ENCODE measurements at regions of chr10 and their contacts with region 1.

Region 1: GRCh38 chr10:77710759-77711682 is 73.4 kb upstream of the KCNMA1 start:
- H3K4me3 ChIP-seq: no peak overlapping the region
- H3K27ac ChIP-seq: no peak overlapping the region
- H3K4me1 ChIP-seq: no peaks in the 10 kb centered on the region
- CTCF ChIP-seq: peak; percentile 97

Region 2: GRCh38 chr10:77173615-77174461 is 537.2 kb before region 1 on chr10:
- CTCF ChIA-PET with region 1: interaction called, 42 read pairs
- POLR2A ChIA-PET with region 1: no interaction called
- H3K4me3 ChIP-seq: no peak overlapping the region
- H3K27ac ChIP-seq: no peak overlapping the region
- H3K4me1 ChIP-seq: no peaks in the 10 kb centered on the region
- CTCF ChIP-seq: peak; percentile 85

Region 3: DNA sequence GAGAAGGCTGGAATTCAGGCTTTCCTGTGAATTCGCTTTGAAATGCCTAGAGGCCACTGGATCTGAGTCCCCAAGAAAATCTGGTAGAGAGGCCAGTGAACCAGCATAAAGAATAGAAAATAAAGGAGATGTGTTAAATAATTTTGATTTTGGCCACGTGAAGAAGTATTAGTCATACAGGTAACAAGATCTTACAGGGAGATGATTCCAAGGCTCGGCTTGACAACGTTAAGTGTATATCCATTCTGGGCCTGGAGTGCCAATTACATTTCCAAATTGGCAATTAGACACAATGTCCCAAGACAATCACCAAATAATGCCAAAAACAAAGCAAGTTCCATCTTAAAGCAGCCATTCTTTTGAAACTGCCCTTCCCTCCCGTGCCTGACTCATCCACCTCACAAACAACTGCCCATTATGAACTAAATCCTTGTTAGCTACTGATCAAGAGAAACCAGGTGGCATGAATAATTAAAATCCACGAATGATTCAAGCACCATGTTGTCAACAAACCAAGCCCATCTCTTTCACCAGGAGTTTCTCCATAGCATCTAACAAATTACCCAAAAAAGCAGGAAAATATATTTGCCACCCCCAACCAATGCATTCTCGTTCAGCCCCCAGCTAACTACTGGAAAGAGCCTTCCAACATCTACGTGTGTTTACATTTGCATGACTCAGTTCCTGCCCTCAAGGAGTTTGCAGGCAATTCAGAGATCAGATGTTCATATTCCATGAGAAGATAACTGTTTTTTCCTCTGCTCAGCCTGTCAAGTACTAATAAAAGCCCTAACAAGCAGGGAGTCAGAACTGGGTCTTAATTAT is 81.9 kb before region 1 on chr10:
- CTCF ChIA-PET with region 1: no interaction called
- POLR2A ChIA-PET with region 1: no interaction called
- H3K4me3 ChIP-seq: no peak overlapping the region
- H3K27ac ChIP-seq: no peak overlapping the region
- H3K4me1 ChIP-seq: no peaks in the 10 kb centered on the region
- CTCF ChIP-seq: no peak

Region 4: DNA sequence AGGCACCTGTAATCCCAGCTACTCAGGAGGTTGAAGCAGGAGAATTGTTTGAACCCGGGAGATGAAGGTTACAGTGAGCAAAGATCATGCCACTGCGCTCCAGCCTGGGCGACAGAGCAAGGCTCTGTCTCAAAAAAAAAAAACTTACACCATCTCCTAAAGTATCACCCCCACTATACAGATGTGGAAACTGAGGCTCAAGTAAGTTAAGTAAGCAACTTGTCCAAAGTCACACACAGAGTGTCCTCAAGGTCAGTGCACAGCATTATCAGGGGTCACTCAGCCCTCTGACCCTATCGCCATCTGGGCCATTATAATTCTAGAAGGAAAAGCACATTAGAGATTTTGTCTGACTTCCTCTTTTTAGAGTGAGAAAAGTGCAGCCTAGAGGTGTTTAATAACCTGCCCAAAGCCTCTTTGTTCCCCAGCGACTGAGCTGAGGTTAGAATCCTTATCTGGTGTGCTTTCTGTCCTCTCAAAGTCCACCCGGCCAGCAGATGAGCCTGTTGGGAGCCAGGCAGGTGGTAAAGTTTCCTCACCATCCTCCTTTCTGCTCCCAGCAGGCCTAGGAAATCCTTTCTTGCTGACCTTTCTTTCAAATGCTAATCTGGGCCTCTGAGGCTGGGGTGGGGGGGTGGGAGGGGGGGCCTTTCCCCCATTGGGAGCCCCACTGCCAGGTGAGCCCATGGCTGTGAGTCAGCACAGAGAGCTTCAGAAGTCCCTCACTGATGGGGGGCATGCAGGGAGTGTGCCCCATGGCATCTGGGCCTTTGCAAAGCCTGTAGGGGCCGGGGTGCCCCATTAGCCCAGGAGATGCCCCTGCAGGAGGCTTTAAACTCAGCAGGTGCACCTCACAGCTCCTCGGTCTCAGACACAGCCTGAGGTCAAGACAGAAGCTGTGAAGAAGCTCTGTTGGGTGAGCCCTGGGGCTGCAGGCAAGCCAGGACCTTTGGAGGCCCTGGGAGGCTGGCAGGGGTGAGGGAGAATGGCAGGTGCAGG is 61.4 kb before region 1 on chr10:
- CTCF ChIA-PET with region 1: interaction called, 13 read pairs
- POLR2A ChIA-PET with region 1: no interaction called
- H3K4me3 ChIP-seq: no peak overlapping the region
- H3K27ac ChIP-seq: no peak overlapping the region
- H3K4me1 ChIP-seq: no peaks in the 10 kb centered on the region
- CTCF ChIP-seq: no peak

Region 5: DNA sequence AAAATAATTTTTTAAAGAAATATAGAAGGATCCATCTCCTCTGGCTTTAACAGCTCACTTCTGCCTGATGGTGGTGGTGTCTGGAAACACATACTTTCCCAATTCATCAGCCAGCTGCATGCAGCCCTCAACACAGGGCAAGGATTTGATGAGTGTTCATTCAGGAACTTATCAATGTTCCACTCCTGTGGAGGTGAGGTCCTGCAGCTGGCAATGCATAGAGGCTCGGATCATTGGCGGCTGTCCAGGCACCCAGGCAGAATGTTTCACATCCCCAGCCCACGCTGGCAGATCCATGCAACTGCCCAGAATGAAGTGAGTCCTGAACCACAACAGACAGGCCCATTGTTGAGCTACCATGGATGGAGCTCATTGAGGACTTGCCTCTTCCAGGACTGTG is 18.2 kb before region 1 on chr10:
- CTCF ChIA-PET with region 1: interaction called, 65 read pairs
- POLR2A ChIA-PET with region 1: no interaction called
- H3K4me3 ChIP-seq: no peak overlapping the region
- H3K27ac ChIP-seq: no peak overlapping the region
- H3K4me1 ChIP-seq: no peaks in the 10 kb centered on the region
- CTCF ChIP-seq: no peak

Region 6: GRCh38 chr10:77756319-77757232 is 45.6 kb after region 1 on chr10:
- CTCF ChIA-PET with region 1: interaction called, 44 read pairs
- POLR2A ChIA-PET with region 1: no interaction called
- H3K4me3 ChIP-seq: no peak overlapping the region
- H3K27ac ChIP-seq: no peak overlapping the region
- H3K4me1 ChIP-seq: no peaks in the 10 kb centered on the region
- CTCF ChIP-seq: peak; percentile 83